ENCODE measurements at regions of chr11 and their contacts with region 1.

Region 1: DNA sequence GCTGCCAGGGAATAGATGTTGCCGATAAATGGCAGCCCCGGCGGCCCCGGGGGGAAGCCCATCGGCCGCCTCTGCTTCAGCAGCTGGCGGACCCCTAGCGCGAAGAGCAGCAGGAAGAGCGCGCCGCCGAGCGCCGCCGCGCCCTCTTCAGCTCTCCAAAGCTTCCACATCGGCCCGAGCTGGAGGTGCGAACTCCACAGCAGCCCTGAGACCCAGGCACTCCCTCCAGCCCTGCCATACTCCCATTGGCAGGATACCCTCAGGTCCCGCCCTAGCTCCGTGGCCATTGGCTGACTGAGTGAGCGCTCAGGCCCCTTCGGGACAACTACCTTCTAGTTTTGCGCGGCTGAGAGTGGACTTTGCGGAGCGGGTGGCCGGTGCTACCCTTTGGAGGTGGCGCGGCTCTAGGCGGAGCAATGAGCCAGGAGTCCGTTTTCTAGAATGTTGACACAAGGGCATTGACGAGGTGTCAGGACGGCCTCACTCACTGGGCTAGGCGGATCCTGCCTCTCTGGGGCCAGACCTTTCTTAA is at the start of gene CYP2R1:
- DNase-seq: peak; percentile 76
- H3K4me3 ChIP-seq: peak within 1 kb of the TSS; percentile 62 to 96 (median 86)
- H3K27ac ChIP-seq: peak within 1 kb of the TSS; percentile 90 to 98 (median 96)
- H3K4me1 ChIP-seq: peaks cover 2 to 45% (median 10%) of the 10 kb centered on the region in 3 donors
- H3K27me3 ChIP-seq: no peaks in the 10 kb centered on the region
- CTCF ChIP-seq: no peak
- POLR2A ChIP-seq: peak in 2 of 4 donors; percentile 3 to 74
- total RNA-seq, gene CYP2R1: 13.0 to 20.4 (median 16.3) TPM

Region 2: GRCh38 chr11:14643697-14644225 is 248.3 kb before region 1 on chr11 and contains the start of gene PDE3B:
- intact Hi-C with region 1: loop called (anchors 10 kb)
- DNase-seq: no peak
- H3K4me3 ChIP-seq: peak within 1 kb of the TSS; percentile 50 to 82 (median 72)
- H3K27ac ChIP-seq: peak within 1 kb of the TSS; percentile 78 to 90 (median 84)
- H3K4me1 ChIP-seq: peaks cover 0 to 29% (median 7%) of the 10 kb centered on the region in 3 donors
- H3K27me3 ChIP-seq: peaks cover 0 to 52% (median 0%) of the 10 kb centered on the region in 4 donors
- CTCF ChIP-seq: no peak
- POLR2A ChIP-seq: peak in 2 of 4 donors; percentile 61 to 81
- total RNA-seq, gene PDE3B: 1.2 to 12.6 (median 2.1) TPM

Region 3: GRCh38 chr11:14907411-14908213 is 15.5 kb after region 1 on chr11:
- intact Hi-C with region 1: no loop called
- DNase-seq: peak; percentile 12
- H3K4me3 ChIP-seq: no peak overlapping the region
- H3K27ac ChIP-seq: no peak overlapping the region
- H3K4me1 ChIP-seq: peaks cover 5 to 40% (median 12%) of the 10 kb centered on the region in 3 donors
- H3K27me3 ChIP-seq: no peaks in the 10 kb centered on the region
- CTCF ChIP-seq: peak in 5 of 6 experiments; percentile 68 to 77 (median 73)
- POLR2A ChIP-seq: no peak

Region 4: GRCh38 chr11:15101072-15101709 is 209.1 kb after region 1 on chr11:
- intact Hi-C with region 1: no loop called
- DNase-seq: no peak
- H3K4me3 ChIP-seq: no peak overlapping the region
- H3K27ac ChIP-seq: no peak overlapping the region
- H3K4me1 ChIP-seq: no peaks in the 10 kb centered on the region
- H3K27me3 ChIP-seq: peaks cover 0 to 8% (median 0%) of the 10 kb centered on the region in 4 donors
- CTCF ChIP-seq: peak; percentile 76 to 94 (median 82)
- POLR2A ChIP-seq: no peak